ENCODE measurements at regions of chr1 and their contacts with region 1.

Region 1: GRCh38 chr1:16055613-16056520 is 12.3 kb downstream of the CLCNKB start:
- DNase-seq: peak; percentile 80 to 92
- ATAC-seq: peak; percentile 86 to 100 (median 99)
- H3K4me3 ChIP-seq: no peak overlapping the region
- H3K4me3 Mint-ChIP-seq: no peak overlapping the region
- H3K27ac ChIP-seq: no peak overlapping the region
- H3K27ac Mint-ChIP-seq: no peak overlapping the region
- H3K4me1 ChIP-seq: peaks cover 6% of the 10 kb centered on the region
- H3K4me1 Mint-ChIP-seq: no peaks in the 10 kb centered on the region
- H3K27me3 ChIP-seq: no peaks in the 10 kb centered on the region
- H3K27me3 Mint-ChIP-seq: no peaks in the 10 kb centered on the region
- CTCF ChIP-seq: peak; percentile 80

Region 2: GRCh38 chr1:15788624-15789301 is 267.1 kb before region 1 on chr1:
- intact Hi-C with region 1: loop called (anchors 1 kb)
- DNase-seq: no peak
- ATAC-seq: no peak
- H3K4me3 ChIP-seq: no peak overlapping the region
- H3K4me3 Mint-ChIP-seq: no peak overlapping the region
- H3K27ac ChIP-seq: no peak overlapping the region
- H3K27ac Mint-ChIP-seq: no peak overlapping the region
- H3K4me1 ChIP-seq: peaks cover 5% of the 10 kb centered on the region
- H3K4me1 Mint-ChIP-seq: peaks cover 5% of the 10 kb centered on the region in 2 donors
- H3K27me3 ChIP-seq: no peaks in the 10 kb centered on the region
- H3K27me3 Mint-ChIP-seq: peaks cover 0 to 5% of the 10 kb centered on the region in 2 donors
- CTCF ChIP-seq: no peak

Region 3: DNA sequence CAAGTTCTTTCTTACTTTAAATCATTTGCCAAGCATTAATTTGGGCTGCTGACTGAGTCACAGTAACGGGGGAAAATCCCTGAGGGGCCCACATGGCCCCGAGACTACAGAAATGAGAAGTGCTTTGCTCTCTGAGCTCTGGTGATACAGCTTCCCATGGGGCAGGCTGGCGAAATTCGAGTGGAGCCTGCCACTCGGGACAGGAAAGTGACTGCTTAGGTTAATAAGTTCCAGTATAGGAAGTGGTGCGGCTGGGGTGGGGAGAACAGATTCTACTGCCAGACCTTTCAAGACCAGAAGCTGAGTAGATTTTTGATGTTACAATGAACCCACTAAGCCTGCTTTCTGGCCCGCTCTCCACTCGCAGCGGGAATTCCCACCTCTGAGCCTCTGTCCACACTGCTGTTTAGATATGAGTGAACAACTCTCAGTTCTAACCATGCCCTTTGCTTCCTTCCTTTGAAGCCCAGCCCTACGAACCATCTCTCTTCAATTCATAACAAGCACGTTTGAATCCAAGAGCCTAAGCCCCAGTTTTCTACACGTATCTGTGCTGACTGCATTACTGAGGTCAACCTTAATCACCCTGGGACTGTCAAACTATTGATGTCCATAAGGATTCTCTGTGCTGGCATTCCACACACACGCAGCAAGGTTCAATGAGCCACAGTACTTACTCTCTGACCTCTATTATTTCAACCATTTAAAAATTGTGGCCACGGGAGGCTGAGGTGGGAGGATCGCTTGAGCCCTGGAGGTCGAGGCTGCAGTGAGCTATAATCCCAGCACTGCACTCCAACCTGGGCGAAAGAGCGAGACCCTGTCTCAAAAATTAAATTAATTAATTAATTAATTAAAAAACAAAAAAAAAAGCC is 89.5 kb before region 1 on chr1:
- intact Hi-C with region 1: no loop called
- DNase-seq: peak in 1 of 2 donors; percentile 72
- ATAC-seq: peak; percentile 74 to 84 (median 78)
- H3K4me3 ChIP-seq: no peak overlapping the region
- H3K4me3 Mint-ChIP-seq: peak overlapping the region; percentile 33
- H3K27ac ChIP-seq: peak overlapping the region; percentile 58
- H3K27ac Mint-ChIP-seq: peak overlapping the region; percentile 70 to 81
- H3K4me1 ChIP-seq: peaks cover 33% of the 10 kb centered on the region
- H3K4me1 Mint-ChIP-seq: peaks cover 36 to 44% of the 10 kb centered on the region in 2 donors
- H3K27me3 ChIP-seq: no peaks in the 10 kb centered on the region
- H3K27me3 Mint-ChIP-seq: no peaks in the 10 kb centered on the region
- CTCF ChIP-seq: no peak

Region 4: DNA sequence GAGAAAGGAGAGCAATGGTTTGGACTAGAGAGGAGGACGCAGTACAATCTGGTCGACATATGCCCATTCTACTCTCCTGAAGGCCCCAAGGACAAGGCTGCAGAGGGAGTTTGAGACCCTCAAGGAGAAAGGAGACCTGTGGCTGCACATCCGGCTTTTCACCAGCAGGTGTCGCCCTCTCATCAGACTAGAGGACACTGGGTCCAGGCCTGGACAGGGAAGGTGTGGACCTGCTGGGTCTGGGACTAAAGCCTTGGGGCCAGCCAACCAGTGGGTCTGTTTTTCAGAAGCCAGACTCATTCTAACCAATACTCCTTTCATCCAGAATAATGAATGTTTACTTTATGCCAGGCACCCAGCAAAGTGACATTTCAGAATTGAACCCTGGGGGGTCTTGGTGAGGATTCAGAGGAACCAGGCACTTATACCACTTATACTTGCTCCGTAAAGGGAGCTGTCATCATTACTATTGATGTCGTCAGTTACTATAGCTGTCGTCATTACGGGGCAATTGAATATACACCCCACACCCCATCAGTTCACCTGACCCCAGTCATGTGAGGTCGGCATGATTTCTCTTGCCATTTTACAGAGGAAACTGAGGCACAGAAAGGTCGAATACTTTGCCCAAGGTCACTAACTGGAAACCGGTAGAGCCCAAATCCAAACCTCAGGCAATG is 46.7 kb before region 1 on chr1:
- intact Hi-C with region 1: loop called (anchors 1 kb)
- DNase-seq: peak; percentile 71 to 83
- ATAC-seq: peak; percentile 32 to 74 (median 66)
- H3K4me3 ChIP-seq: no peak overlapping the region
- H3K4me3 Mint-ChIP-seq: no peak overlapping the region
- H3K27ac ChIP-seq: no peak overlapping the region
- H3K27ac Mint-ChIP-seq: no peak overlapping the region
- H3K4me1 ChIP-seq: peaks cover 23% of the 10 kb centered on the region
- H3K4me1 Mint-ChIP-seq: peaks cover 0 to 15% of the 10 kb centered on the region in 2 donors
- H3K27me3 ChIP-seq: no peaks in the 10 kb centered on the region
- H3K27me3 Mint-ChIP-seq: no peaks in the 10 kb centered on the region
- CTCF ChIP-seq: peak; percentile 98

Measured in natural killer cell (primary cell).